ENCODE measurements at regions of chr2 and their contacts with region 1.

Region 1: GRCh38 chr2:68467077-68467960 is at the starts of genes APLF and FBXO48:
- DNase-seq: peak; percentile 99
- ATAC-seq: peak; percentile 95
- H3K4me3 Mint-ChIP-seq: peak within 1 kb of the TSS; percentile 92
- H3K27ac Mint-ChIP-seq: peak within 1 kb of the TSS; percentile 91
- H3K4me1 Mint-ChIP-seq: peaks cover 43% of the 10 kb centered on the region
- H3K27me3 Mint-ChIP-seq: no peaks in the 10 kb centered on the region
- CTCF ChIP-seq: no peak
- total RNA-seq, gene APLF: 2.9 to 3.5 TPM
- total RNA-seq, gene FBXO48: 1.3 to 1.4 TPM

Region 2: DNA sequence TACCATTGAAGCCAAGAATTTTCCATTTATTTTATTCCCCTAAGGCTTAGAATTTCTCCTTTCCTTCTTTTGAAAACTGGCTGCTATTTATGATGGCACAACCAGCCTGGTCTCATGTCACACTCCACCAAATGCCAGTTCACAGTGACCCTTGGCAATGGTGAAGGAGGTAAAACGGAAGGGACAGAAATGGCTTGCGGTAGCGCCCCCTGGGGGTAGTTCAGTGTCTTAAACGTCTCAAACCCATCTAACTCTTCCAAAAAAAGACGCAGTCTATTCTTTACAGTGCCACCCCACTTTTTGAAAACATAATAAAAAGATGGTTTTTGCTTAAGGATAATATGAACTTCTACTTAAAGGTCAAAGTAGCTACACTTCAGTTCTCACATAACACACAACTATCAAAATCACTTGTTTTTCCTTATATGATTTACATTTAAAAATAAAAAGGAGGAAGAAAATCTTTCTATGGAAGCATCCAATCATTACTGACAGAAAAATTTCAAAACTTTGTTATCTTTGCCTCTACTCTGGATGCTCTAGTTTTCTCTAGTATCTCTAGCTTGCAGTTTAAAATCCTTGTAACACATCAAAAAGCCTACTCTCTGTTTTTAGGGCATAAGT is 281.7 kb before region 1 on chr2:
- CTCF ChIA-PET with region 1: no interaction called
- POLR2A ChIA-PET with region 1: no interaction called
- intact Hi-C with region 1: no loop called
- DNase-seq: peak; percentile 75
- ATAC-seq: no peak
- H3K4me3 Mint-ChIP-seq: no peak overlapping the region
- H3K27ac Mint-ChIP-seq: peak overlapping the region; percentile 1
- H3K4me1 Mint-ChIP-seq: peaks cover 22% of the 10 kb centered on the region
- H3K27me3 Mint-ChIP-seq: no peaks in the 10 kb centered on the region
- CTCF ChIP-seq: peak; percentile 88

Region 3: DNA sequence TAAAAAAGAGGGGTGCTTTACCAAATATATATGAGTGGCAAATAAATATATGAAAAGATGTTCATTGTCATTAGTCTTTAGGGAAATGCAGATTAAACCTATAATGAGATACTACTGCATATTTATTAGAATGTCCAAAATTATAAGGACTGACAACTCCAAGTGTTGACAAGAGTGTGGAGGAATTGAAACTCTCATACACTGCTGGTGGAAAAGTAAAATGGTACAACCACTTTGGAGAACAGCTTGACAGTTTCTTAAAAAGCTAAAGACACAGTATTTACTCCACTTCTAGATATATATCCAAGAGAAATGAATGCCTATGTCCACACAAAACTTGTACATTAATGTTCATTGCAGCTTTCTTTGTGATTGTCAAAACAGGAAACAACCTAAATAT is 51.8 kb before region 1 on chr2:
- CTCF ChIA-PET with region 1: no interaction called
- POLR2A ChIA-PET with region 1: no interaction called
- intact Hi-C with region 1: no loop called
- DNase-seq: no peak
- ATAC-seq: no peak
- H3K4me3 Mint-ChIP-seq: no peak overlapping the region
- H3K27ac Mint-ChIP-seq: no peak overlapping the region
- H3K4me1 Mint-ChIP-seq: peaks cover 26% of the 10 kb centered on the region
- H3K27me3 Mint-ChIP-seq: no peaks in the 10 kb centered on the region
- CTCF ChIP-seq: no peak

Region 4: GRCh38 chr2:68487773-68488355 is 20.5 kb after region 1 on chr2:
- CTCF ChIA-PET with region 1: interaction called, 41 read pairs
- POLR2A ChIA-PET with region 1: no interaction called
- intact Hi-C with region 1: no loop called
- DNase-seq: no peak
- ATAC-seq: peak; percentile 60
- H3K4me3 Mint-ChIP-seq: no peak overlapping the region
- H3K27ac Mint-ChIP-seq: no peak overlapping the region
- H3K4me1 Mint-ChIP-seq: peaks cover 5% of the 10 kb centered on the region
- H3K27me3 Mint-ChIP-seq: no peaks in the 10 kb centered on the region
- CTCF ChIP-seq: peak; percentile 72

Region 5: GRCh38 chr2:68516051-68516955 is 49.0 kb after region 1 on chr2:
- CTCF ChIA-PET with region 1: interaction called, 14 read pairs
- POLR2A ChIA-PET with region 1: no interaction called
- intact Hi-C with region 1: no loop called
- DNase-seq: peak; percentile 13
- ATAC-seq: peak; percentile 55
- H3K4me3 Mint-ChIP-seq: no peak overlapping the region
- H3K27ac Mint-ChIP-seq: no peak overlapping the region
- H3K4me1 Mint-ChIP-seq: peaks cover 6% of the 10 kb centered on the region
- H3K27me3 Mint-ChIP-seq: no peaks in the 10 kb centered on the region
- CTCF ChIP-seq: no peak

Region 6: DNA sequence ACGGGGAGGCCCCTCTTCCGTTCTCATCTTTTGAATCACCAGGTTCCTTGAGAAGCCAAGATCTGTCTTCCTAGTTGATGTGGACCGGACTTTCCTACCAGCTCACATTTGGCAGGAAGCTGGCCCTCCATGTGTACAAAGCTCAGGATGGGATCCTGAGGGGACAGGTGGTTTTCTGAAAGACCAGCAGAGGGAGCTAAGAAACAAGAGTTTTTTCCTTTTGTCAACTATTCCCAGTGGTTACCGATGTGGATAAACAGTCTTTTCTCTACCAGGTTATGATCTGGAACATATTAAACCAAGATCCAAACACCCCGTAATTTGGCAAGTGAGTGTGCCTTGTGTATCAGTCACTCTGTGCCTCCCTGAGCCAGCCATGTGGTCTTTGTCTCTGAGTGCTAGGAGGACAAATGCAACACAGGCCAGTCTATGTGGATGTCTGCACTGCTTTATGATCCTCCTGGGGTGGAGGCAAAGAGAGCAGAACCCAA is 242.1 kb after region 1 on chr2:
- CTCF ChIA-PET with region 1: interaction called, 27 read pairs
- POLR2A ChIA-PET with region 1: no interaction called
- intact Hi-C with region 1: no loop called
- DNase-seq: peak; percentile 32
- ATAC-seq: peak; percentile 84
- H3K4me3 Mint-ChIP-seq: no peak overlapping the region
- H3K27ac Mint-ChIP-seq: peak overlapping the region; percentile 63
- H3K4me1 Mint-ChIP-seq: peaks cover 26% of the 10 kb centered on the region
- H3K27me3 Mint-ChIP-seq: peaks cover 2% of the 10 kb centered on the region
- CTCF ChIP-seq: peak; percentile 87

Region 7: DNA sequence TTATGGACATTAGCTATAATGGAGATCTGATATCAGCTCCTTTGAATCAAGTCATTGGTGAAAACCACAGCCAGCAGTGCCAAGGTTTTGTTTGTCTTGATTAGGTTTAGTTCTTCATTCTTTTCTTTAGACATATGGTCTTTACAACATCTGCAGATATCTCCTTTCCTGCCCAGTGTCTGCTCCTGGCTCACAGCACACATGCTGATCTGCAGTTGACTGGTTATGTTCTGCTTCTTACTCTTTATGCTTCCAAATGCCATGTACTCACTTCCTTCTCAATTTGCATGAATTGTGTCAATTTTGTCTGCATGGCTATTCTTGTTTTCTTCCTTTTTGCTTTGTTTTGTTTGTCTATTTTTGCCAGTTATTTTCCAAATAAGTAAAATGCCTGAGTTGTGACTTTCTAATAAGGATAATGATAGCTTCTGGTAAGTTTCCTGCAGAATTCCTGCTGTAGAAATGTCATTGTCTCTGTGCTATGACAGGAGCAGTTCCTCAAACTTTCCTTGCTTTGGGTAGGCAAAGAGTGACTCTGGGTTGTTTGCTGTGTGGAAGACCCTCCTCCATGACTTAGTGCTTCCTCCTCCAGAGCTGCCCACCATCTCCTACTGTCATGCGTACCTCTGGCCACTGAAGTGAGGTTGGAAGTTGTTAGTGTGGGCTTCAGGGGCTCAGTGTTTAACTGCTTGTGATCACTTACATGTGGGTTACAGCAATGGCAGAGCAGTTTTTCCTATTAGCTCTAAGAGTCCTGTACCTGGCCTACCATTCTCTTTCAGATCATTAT is 275.5 kb after region 1 on chr2:
- CTCF ChIA-PET with region 1: interaction called, 17 read pairs
- POLR2A ChIA-PET with region 1: interaction called, 4 read pairs
- intact Hi-C with region 1: no loop called
- DNase-seq: no peak
- ATAC-seq: no peak
- H3K4me3 Mint-ChIP-seq: peak overlapping the region; percentile 2
- H3K27ac Mint-ChIP-seq: peak overlapping the region; percentile 81
- H3K4me1 Mint-ChIP-seq: peaks cover 89% of the 10 kb centered on the region
- H3K27me3 Mint-ChIP-seq: no peaks in the 10 kb centered on the region
- CTCF ChIP-seq: no peak

Region 8: DNA sequence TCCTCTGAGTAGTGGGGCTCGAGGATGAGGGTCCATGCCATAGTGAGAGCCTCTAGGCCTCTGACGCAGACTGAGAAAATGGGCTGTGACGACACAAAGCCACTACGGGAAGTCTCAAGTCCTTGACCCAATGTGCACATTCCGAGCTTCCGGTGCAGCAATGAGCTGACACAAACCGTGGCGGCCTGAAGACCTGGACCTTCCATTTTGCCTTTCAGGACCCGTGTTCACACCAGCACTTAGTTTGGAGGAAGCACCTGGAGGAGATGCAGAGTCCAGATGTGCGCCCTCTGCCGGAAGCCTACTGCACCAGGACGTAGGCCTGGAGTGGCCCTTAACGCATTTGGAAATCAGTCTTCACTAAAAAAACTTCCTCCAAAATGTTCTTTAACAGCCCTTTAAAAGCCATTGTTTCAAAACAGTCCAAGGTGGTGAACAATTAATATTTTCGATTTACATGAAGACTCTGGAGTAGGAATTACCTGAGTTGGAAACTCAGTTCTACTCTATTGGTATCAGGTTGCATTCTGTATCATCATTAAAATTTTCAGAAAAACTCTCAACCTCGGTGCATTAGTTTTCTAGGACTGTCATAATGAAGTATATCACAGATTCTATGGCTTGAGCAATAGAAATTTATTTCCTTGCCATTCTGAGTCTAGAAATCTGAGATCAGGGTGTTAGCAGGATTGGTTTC is 370.0 kb after region 1 on chr2:
- CTCF ChIA-PET with region 1: interaction called, 20 read pairs
- POLR2A ChIA-PET with region 1: no interaction called
- intact Hi-C with region 1: loop called (anchors 5 kb)
- DNase-seq: peak; percentile 85
- ATAC-seq: peak; percentile 55
- H3K4me3 Mint-ChIP-seq: no peak overlapping the region
- H3K27ac Mint-ChIP-seq: peak overlapping the region; percentile 43
- H3K4me1 Mint-ChIP-seq: peaks cover 37% of the 10 kb centered on the region
- H3K27me3 Mint-ChIP-seq: no peaks in the 10 kb centered on the region
- CTCF ChIP-seq: peak; percentile 84

Region 9: DNA sequence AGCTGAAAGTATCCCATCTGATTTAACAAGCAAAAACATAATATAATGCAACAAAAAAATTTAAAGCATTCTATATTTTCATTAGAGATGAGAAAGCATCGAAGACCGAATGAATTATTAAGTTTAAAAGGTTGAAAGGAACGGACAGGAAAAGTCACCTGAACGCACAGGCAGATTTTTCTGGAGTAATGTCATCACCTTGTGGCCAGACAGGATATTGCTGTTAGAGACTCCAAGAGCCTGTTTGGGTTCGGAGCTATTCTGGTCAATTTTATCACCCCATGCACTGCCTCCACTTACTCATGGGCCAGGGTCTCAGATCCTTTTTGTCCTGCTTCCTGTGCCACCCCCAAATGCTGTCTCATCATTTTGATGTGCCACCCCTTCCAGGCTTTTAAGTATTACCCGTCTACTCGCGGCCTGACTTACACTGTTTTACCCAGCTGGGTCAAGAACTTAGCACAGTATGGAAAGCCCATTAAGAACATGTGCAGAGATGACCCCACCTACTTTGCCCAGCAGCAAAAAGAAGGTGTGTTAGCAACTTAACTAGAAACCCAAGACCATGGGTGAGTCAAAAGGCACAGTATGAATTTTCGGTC is 458.1 kb after region 1 on chr2:
- CTCF ChIA-PET with region 1: interaction called, 139 read pairs
- POLR2A ChIA-PET with region 1: interaction called, 3 read pairs
- intact Hi-C with region 1: no loop called
- DNase-seq: peak; percentile 67
- ATAC-seq: peak; percentile 87
- H3K4me3 Mint-ChIP-seq: no peak overlapping the region
- H3K27ac Mint-ChIP-seq: no peak overlapping the region
- H3K4me1 Mint-ChIP-seq: peaks cover 1% of the 10 kb centered on the region
- H3K27me3 Mint-ChIP-seq: peaks cover 2% of the 10 kb centered on the region
- CTCF ChIP-seq: peak; percentile 97

Measured in activated CD8-positive, alpha-beta T cell treated with anti-CD3 and anti-CD28 coated beads for 36 hours (primary cell).